Right ventricle myocardium inferior (tissue), 1 donor: ENCODE measurements at regions of chr4 and their contacts with region 1.

Region 1: DNA sequence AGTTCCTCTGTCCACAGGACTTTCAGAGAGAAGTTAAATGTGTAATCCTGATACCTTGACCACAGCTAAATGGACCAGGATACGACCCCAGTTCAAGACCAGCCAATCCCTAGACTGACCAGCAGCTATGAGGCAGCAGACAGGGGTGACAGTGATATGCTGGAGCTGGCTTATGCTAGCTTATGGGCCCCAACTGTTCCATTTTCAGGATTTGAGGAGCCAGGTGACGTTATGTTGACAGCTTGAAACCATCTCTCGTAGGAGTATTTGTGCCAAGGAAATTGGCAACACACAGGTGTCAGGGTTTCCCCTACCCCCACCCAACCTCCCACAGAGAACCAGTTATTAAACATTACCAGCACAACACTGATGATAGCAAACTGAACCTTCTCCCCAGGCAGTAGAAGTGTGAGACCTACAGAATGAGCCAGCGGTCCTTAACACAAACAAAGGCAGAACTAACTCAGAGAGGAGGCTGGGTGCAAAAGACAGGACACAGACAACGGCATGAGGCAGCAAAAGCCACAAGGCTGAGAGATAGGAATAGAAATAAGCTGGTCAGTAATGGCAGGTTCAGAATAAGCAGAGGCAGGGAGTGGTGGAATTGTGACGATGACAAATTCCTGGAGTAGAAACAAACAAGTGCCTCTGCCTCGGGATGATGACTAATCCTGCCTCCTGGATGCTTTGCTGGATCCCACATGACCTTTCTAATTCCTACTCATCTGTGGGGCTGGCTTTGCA is 85.6 kb upstream of the CPEB2 start:
- DNase-seq: no peak
- ATAC-seq: peak; percentile 94

Region 2: DNA sequence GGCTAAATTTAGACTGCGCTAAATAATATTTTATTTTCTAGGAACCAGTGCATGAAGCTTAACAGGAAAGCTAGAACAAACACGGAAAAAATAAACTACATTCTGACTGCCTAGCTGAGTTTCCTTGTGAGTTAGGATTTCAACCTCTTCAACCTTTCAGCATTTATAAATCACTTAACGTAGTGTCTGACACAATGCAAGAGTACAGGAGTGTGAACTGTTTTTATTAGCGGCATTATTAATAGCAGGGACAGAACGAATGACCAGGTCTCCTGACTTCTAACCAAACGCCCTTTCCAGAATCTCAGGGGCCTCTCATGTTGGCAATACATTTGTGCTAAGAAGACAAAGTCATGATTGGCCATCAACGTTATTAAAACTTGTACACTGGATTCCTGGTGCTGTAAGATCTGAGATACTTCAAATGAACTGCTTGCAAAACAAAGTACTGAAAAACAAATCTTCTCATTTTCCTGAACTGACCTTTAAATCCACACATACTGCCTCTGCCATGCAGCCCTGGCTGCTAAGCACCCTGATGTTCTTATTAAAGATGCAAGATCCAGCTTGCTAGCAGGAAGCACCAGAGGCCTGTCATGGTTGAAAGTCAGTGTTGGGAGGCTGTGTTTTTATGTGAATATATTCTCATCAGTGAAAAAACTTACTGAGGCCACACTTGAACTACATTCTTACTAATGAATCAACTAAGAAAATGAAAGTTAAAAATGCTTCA is 294.8 kb before region 1 on chr4:
- intact Hi-C with region 1: loop called (anchors 10 kb)
- DNase-seq: no peak
- ATAC-seq: peak; percentile 95

Region 3: GRCh38 chr4:14841801-14842768 is 74.6 kb before region 1 on chr4:
- intact Hi-C with region 1: loop called (anchors 5 kb)
- DNase-seq: no peak
- ATAC-seq: peak; percentile 72

Region 4: GRCh38 chr4:15010038-15010585 is 93.4 kb after region 1 on chr4:
- intact Hi-C with region 1: no loop called
- DNase-seq: no peak
- ATAC-seq: no peak